GM10248 (cell line): ENCODE measurements at regions of chr1 and their contacts with region 1.

Region 1: DNA sequence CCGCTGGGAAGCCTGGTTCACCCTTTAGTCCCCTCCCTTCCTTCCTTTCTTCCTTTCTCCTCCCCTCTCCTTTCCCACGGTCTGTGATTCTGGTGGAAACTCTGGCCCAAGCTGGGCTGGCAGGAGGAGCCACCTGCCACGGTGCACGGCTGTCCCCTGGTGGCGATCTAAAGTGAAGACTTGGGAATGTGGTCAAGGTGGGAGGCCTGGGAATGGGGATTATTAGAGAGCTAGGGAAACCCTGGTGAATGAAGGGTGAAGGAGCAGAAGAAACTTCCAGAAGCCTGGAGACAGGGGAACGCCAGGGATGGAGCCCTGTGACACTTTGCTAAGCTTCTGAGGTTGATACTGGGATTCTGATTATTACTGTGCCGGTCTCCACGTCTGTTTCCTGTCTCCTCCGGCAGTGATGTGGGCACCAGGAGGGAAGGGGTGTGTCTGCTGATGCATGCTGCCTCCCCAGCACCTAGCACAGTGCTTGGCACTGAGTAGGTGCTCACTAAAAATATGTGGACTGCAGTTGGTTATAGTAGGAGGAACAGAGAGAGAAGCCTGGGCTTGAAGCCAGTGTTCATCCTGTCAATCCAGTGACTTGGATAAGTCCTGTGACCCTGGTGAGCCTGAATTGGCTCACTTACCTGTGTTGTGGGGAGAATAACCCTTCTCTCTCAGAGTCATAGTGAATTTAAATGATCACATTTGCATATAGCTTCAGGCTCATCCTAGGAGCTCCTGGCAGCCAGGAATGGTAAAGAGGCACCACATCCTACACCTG is 71.2 kb upstream of the NBPF3 start:
- DNase-seq: peak; percentile 64
- CTCF ChIP-seq: peak; percentile 97

Region 2: GRCh38 chr1:21176586-21177555 is 191.8 kb before region 1 on chr1 and contains the start of gene EIF4G3:
- CTCF ChIA-PET with region 1: no interaction called
- POLR2A ChIA-PET with region 1: no interaction called
- DNase-seq: peak; percentile 100
- CTCF ChIP-seq: no peak

Region 3: DNA sequence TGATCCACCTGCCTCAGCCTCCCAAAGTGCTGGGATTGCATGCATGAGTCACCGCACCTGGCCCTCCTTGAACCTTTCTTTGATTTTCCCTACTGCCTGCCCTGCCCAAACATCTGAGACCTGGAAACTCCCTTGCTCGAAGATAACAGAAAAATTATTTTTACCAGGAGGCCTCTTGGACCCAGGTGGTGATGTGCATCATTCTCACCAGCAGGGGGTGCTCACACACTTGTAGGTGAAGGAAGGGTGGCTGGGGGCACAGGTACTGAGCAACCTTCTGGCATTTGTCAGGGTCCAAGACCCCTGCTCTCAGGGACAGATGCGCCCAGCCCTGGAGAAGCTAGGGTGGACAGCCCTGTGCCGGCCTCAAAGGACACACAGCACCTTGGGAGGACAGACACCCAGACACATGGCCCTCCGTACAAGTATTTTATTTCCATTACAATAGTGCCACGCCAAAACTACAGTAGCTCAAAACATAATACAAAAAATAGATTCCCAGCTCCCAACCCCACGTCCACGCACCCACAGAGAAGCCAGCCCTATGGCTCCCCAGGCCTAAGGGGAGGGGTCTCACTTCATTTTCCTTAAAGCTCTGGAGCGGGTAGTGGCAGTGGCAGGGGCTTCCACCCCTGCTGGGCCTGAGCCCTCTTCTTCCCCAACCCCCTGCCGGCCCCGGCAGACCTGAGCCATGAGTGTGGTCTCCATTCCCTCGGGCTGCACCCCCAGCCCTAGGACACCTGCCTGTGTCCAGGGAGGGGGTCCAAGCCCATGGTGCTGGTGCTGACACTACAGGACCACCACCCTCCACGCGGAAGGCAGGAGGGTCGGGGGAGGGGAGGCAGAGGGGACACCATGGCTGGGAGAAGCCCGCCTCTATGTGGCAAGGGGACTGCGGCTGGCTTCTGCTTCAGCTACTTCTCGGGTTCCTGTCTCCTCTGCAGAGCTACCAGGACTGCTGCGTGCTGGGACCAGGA is 151.6 kb before region 1 on chr1:
- CTCF ChIA-PET with region 1: interaction called, 67 read pairs
- POLR2A ChIA-PET with region 1: no interaction called
- DNase-seq: peak; percentile 75
- CTCF ChIP-seq: peak; percentile 75

Region 4: GRCh38 chr1:21244986-21245687 is 123.6 kb before region 1 on chr1:
- CTCF ChIA-PET with region 1: interaction called, 65 read pairs
- POLR2A ChIA-PET with region 1: interaction called, 5 read pairs
- DNase-seq: no peak
- CTCF ChIP-seq: peak; percentile 3

Region 5: DNA sequence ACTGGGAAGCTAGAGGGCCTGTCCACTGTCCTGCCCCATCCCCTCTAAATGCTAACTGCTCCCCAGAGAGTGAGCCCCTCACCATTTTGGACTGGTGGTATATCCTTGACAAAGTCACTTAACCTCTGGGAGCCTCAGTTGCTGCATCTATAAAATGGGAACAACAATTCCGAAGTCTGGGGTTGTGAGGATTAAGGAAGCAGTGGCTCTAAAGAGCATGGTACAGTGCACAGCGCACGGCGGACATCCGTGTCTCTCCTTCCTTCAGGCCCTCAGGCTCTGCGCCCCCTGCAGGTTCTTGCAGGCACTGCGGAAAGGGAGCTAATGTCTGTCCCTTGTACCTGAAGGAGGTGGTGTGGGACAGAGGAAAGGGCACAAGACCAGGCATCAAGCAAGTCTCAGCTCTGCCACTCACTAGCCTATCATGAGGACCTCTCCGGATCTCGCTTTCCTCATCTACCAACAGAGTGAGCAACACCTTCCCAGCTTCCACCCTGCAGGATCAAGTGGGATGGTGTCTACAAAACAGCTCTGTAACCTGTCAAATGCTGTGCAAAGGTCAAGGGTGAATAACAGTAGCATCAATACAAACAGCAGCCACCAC is 98.5 kb before region 1 on chr1:
- CTCF ChIA-PET with region 1: interaction called, 81 read pairs
- POLR2A ChIA-PET with region 1: no interaction called
- DNase-seq: peak; percentile 81
- CTCF ChIP-seq: peak; percentile 98

Region 6: DNA sequence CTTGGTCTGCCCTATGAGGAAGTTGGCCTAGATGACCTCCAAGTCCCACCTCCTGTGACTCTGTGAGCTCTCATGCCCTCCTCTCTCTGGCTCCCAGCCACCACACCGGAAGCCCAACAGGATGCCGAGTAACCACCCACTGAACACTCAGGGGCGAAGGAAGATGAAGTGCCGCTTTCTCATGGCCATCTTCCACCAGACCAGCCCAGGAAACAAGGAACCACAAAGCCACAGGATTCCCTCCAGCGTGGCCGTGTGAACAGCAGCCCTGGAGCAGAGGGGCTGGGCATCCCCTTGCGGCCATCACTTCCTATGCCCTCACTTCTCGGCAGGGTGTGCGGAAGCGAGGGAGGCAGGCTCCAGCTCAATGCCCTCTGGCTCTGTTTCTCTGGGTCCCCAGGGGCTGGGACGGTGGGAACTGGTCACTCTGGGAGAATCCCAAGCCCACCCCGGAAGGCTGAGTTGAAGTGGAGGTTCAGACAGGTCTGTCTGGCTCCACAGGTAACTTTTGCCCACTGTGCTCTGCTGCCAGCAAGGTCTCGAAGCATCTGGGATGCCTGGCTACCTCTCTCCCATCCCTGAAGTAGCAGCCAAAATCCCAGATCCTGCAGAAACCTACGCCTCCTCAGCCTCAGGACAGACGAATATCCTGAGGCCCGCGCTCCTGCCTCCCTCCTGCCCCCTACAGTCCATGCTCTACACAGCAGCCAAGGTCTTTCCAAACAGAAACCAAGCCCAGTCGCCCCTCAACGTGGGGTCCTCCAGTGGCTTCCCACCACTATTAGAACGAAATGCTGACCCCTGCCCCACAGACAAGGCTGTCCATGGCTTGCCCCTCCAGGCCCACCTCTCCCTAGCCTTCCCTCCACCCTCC is 34.3 kb before region 1 on chr1:
- CTCF ChIA-PET with region 1: interaction called, 18 read pairs
- POLR2A ChIA-PET with region 1: interaction called, 3 read pairs
- DNase-seq: peak; percentile 78
- CTCF ChIP-seq: peak; percentile 79

Region 7: GRCh38 chr1:21378705-21379494 is 10.2 kb after region 1 on chr1:
- CTCF ChIA-PET with region 1: interaction called, 23 read pairs
- POLR2A ChIA-PET with region 1: no interaction called
- DNase-seq: no peak
- CTCF ChIP-seq: no peak

Region 8: DNA sequence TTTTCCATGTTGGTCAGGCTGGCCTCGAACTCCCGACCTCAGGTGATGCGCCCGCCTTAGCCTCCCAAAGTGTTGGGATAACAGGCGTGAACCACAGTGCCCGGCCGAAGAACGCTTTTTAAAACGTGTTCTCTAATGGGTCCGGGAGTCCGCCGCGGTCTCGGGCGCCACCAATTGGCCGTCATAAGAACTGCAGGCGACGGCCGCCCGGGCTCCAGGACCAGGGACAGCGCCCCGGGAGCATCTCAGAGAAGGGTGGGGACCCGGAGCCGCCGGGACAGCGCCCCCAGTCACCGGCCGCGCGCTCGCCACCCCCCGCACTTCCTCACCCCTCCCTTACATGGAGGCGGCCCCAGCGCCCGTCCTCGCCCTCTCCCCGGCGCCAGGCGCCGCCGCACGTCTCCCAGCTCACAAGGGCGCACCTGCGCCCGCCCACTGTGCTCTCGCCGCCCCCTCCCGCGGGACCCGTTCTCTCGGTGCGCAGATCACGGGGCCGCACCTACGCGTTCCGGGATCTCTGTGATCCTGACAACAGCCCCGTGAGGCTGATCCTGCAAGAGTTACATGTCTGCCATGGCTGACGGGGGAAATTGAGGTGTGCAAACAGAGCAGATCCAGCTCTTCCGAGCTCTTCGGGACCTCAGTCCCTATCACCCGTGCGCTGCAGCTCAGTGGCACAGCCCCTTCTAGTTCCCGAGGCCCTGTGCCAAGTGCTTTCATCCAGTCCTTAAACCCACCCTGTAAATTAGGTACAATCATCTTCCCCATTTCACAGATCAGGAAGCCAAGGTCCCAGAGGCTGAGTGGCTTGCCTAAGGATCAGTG is 290.6 kb after region 1 on chr1:
- CTCF ChIA-PET with region 1: interaction called, 11 read pairs
- POLR2A ChIA-PET with region 1: no interaction called
- DNase-seq: peak; percentile 96
- CTCF ChIP-seq: peak; percentile 97

Region 9: DNA sequence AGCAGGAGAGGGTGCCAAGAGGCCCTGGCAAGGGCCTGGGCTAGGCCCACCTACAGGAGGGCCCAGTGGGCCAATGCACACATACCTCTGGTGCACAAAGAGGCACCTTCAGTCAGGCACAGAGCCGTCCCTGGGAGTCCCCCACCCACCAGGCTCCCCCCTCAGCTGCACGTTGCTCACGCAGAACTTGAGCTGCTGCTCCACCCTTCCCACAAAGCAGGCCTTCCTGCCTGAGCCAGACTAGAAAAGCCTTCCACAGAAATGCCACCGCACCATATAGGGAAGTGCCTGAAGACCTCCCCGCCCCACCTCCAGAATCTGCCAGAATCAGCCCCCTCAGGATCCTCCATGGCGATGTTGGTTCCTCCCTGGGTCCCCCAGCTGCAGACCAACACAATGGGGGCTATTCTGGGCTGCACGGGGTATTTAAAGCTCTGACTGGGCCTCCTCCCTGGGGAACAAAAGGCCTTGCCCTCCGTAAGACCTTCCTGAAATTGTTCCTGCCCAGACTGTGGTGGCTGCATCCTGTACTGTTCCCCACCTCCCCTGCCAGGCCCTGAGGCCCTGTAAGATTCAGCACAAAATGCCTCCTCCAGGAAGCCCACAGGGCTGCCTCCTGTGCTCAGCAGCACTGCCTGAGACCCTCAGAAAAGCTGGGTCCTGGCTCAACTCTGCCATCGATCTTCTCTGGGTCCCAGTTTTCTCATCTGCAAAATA is 541.2 kb after region 1 on chr1:
- CTCF ChIA-PET with region 1: no interaction called
- POLR2A ChIA-PET with region 1: no interaction called
- DNase-seq: peak; percentile 79
- CTCF ChIP-seq: no peak